Vagina (tissue), 2 donors: ENCODE measurements at regions of chr14 and their contacts with region 1.

Region 1: DNA sequence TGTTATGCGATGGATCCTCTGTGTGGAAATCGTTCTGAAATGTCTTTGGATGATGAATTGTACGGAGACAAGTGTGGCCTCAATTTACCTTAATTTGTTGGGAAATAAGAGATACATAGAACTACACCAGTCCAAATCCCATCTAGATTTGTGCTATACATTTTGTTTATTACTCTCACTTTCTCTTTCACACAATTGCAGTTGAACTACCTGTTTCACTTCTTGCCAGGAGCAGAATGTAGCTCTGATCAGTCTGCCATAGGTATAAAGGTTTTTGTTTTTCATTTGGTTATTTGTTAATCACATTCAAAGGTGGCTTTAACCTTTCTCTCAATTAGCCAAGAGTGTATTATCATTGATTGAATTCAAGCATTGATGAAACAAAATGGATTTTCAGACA is 268.2 kb downstream of the SNAPC1 start:
- DNase-seq: no peak
- H3K4me3 ChIP-seq: no peak overlapping the region
- H3K27ac ChIP-seq: no peak overlapping the region
- H3K4me1 ChIP-seq: no peaks in the 10 kb centered on the region
- H3K27me3 ChIP-seq: no peaks in the 10 kb centered on the region
- CTCF ChIP-seq: no peak
- POLR2A ChIP-seq: no peak

Region 2: GRCh38 chr14:62209287-62209899 is 179.0 kb after region 1 on chr14:
- intact Hi-C with region 1: no loop called
- DNase-seq: no peak
- H3K4me3 ChIP-seq: no peak overlapping the region
- H3K27ac ChIP-seq: no peak overlapping the region
- H3K4me1 ChIP-seq: no peaks in the 10 kb centered on the region
- H3K27me3 ChIP-seq: no peaks in the 10 kb centered on the region
- CTCF ChIP-seq: no peak
- POLR2A ChIP-seq: no peak

Region 3: DNA sequence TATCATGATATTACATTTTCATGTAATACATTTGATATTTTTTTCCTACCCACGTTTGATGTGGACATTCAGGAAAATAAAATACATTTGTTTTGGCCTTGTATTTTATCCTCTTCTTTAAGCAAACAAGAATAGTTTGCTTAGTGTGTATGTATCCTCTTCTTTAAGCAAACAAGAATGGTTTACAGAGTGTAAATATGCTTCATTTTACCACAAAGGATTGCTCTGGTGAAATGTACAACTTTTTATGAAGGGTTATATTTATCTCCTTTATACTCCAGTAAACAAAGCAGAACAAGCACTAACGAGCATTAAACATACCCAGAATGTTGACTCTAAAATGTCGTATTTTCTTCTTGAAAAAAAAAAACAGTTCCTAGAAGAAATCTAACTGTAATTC is 770.2 kb after region 1 on chr14:
- intact Hi-C with region 1: loop called (anchors 5 kb)
- DNase-seq: no peak
- H3K4me3 ChIP-seq: no peak overlapping the region
- H3K27ac ChIP-seq: no peak overlapping the region
- H3K4me1 ChIP-seq: no peaks in the 10 kb centered on the region
- H3K27me3 ChIP-seq: no peaks in the 10 kb centered on the region
- CTCF ChIP-seq: no peak
- POLR2A ChIP-seq: no peak